PC-3 (cell line): ENCODE measurements at regions of chr3 and their contacts with region 1.

Region 1: DNA sequence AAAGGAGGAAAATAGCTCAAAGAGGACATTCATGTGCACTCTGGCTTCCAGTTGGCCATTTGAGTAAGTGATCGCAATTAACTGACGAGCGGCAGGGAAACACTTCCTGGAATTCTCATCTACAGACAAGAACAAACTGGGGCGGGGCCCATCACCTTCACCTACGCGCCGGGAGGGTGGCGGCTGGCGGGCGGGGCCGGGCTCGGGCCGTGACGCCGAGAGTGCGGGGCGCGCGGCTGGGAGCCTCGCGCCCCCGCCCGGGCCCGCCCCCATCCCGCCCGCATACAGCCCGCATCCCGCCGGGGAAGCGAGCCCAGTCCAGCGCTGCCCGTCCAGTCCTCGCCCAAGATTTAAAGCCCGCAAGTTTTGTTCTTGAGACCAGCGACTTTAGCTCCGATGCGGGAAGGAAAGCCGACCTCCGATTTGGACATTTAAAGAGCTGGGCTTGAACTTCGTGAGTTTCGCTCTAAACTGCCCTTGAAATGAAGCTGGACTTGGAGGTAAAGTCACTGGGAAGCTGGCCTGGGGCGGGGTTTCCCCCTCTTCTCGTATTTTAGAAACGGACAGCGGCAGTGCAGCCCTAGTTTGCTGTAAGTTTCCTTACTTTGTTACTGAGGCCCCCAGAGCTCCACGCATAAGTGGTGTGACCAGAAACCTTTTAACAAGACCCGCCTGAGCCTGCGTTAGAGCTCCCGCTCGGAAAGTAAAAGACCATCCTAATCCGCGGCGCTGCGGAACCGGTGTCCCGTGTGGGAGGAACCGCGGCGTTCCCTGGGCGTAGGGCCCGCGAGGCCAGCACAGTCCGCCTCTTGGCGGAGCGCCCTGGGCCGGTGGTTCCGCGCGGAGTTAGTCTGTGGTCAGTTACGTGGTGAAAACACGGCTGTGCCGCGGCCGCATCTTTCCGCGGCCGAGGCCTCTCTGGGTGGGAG is at the start of gene B3GNT5:
- DNase-seq: peak; percentile 75
- ATAC-seq: peak; percentile 53
- H3K4me3 ChIP-seq: peak within 1 kb of the TSS; percentile 89
- H3K27ac ChIP-seq: peak within 1 kb of the TSS; percentile 88
- H3K4me1 ChIP-seq: peaks cover 34% of the 10 kb centered on the region
- H3K27me3 ChIP-seq: no peaks in the 10 kb centered on the region
- CTCF ChIP-seq: no peak
- total RNA-seq, gene B3GNT5: 22.9 and 29.2 TPM in 2 replicates

Region 2: DNA sequence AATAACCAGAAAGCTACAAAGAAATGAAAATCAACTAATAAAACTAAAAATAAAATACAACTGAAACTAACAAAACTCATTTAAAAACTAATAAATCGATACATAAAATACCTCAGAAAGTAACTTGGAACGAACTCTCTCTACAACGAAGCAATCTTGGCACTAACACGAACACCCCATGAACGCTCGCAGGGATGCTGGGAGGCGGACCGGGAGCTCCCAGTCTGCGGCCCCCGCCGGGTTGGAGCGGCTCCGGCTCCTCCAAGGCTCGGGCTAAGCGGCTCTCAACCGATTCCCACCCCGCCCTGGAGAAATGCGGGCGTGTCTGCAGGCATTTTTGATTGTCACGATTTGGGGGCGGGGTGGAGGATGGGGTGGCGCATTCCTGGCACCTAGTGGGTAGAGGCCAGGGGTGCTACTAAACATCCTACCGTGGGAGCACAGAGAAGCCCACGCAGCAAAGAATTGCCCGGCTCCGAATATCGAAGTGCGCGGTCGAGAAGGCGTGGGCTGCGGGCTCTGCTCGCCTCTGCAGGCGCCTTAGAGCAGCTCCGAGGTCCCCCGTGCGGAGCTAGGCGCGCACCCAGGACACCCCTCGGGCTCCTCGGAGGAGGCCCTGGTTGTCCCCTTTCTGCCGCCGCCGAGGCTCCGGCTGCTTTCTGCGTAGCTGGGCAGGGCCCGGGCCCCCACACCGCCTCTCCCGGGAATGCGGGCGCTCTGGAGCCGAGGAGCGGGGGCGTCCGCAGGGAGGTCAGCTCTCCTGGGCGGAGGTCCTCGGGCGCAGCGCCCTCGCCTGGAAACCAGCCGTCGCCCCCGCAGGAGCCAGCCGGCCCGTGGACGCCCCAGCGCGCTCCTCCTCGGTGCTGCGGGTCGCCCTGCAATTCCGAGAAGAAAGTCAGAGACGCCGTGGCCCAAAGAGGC is 74.3 kb before region 1 on chr3:
- CTCF ChIA-PET with region 1: interaction called, 26 read pairs
- POLR2A ChIA-PET with region 1: interaction called, 3 read pairs
- intact Hi-C with region 1: loop called (anchors 1 kb)
- DNase-seq: peak; percentile 70
- ATAC-seq: peak; percentile 61
- H3K4me3 ChIP-seq: peak overlapping the region; percentile 85
- H3K27ac ChIP-seq: no peak overlapping the region
- H3K4me1 ChIP-seq: peaks cover 17% of the 10 kb centered on the region; the same call in 1 of the 2 replicates
- H3K27me3 ChIP-seq: no peaks in the 10 kb centered on the region
- CTCF ChIP-seq: peak; percentile 60

Region 3: GRCh38 chr3:183188895-183189462 is 64.3 kb before region 1 on chr3:
- CTCF ChIA-PET with region 1: interaction called, 26 read pairs
- POLR2A ChIA-PET with region 1: interaction called, 8 read pairs
- intact Hi-C with region 1: loop called (anchors 1 kb)
- DNase-seq: peak; percentile 48
- ATAC-seq: no peak
- H3K4me3 ChIP-seq: no peak overlapping the region
- H3K27ac ChIP-seq: no peak overlapping the region
- H3K4me1 ChIP-seq: peaks cover 37% of the 10 kb centered on the region
- H3K27me3 ChIP-seq: no peaks in the 10 kb centered on the region
- CTCF ChIP-seq: peak; percentile 56

Region 4: GRCh38 chr3:183193818-183194689 is 59.2 kb before region 1 on chr3:
- CTCF ChIA-PET with region 1: interaction called, 6 read pairs
- POLR2A ChIA-PET with region 1: interaction called, 6 read pairs
- intact Hi-C with region 1: loop called (anchors 1 kb)
- DNase-seq: peak; percentile 90
- ATAC-seq: peak; percentile 90
- H3K4me3 ChIP-seq: peak overlapping the region; percentile 12; the same call in 1 of the 2 replicates
- H3K27ac ChIP-seq: peak overlapping the region; percentile 77
- H3K4me1 ChIP-seq: peaks cover 24% of the 10 kb centered on the region
- H3K27me3 ChIP-seq: no peaks in the 10 kb centered on the region
- CTCF ChIP-seq: no peak

Region 5: GRCh38 chr3:183218826-183219225 is 34.4 kb before region 1 on chr3:
- CTCF ChIA-PET with region 1: no interaction called
- POLR2A ChIA-PET with region 1: no interaction called
- intact Hi-C with region 1: no loop called
- DNase-seq: no peak
- ATAC-seq: no peak
- H3K4me3 ChIP-seq: no peak overlapping the region
- H3K27ac ChIP-seq: no peak overlapping the region
- H3K4me1 ChIP-seq: no peaks in the 10 kb centered on the region
- H3K27me3 ChIP-seq: no peaks in the 10 kb centered on the region
- CTCF ChIP-seq: no peak

Region 6: GRCh38 chr3:183291497-183292040 is 38.3 kb after region 1 on chr3:
- CTCF ChIA-PET with region 1: no interaction called
- POLR2A ChIA-PET with region 1: interaction called, 8 read pairs
- intact Hi-C with region 1: loop called (anchors 1 kb)
- DNase-seq: peak; percentile 81
- ATAC-seq: peak; percentile 66
- H3K4me3 ChIP-seq: no peak overlapping the region
- H3K27ac ChIP-seq: peak overlapping the region; percentile 88
- H3K4me1 ChIP-seq: peaks cover 55% of the 10 kb centered on the region
- H3K27me3 ChIP-seq: no peaks in the 10 kb centered on the region
- CTCF ChIP-seq: no peak

Region 7: GRCh38 chr3:183328823-183329222 is 75.6 kb after region 1 on chr3:
- CTCF ChIA-PET with region 1: interaction called, 4 read pairs
- POLR2A ChIA-PET with region 1: no interaction called
- intact Hi-C with region 1: loop called (anchors 2 kb)
- DNase-seq: peak; percentile 56
- ATAC-seq: peak; percentile 11
- H3K4me3 ChIP-seq: no peak overlapping the region
- H3K27ac ChIP-seq: peak overlapping the region; percentile 17; the same call in 1 of the 2 replicates
- H3K4me1 ChIP-seq: peaks cover 42% of the 10 kb centered on the region
- H3K27me3 ChIP-seq: no peaks in the 10 kb centered on the region
- CTCF ChIP-seq: no peak